ENCODE measurements at regions of chr5 and their contacts with region 1.

Region 1: GRCh38 chr5:134411546-134412266 is at the start of gene CDKN2AIPNL:
- DNase-seq: peak; percentile 91
- H3K4me3 ChIP-seq: peak within 1 kb of the TSS; percentile 100
- H3K27ac ChIP-seq: peak within 1 kb of the TSS; percentile 27
- H3K4me1 ChIP-seq: peaks cover 26% of the 10 kb centered on the region
- CTCF ChIP-seq: peak; percentile 79
- total RNA-seq, gene CDKN2AIPNL: 40.5 and 47.8 TPM in 2 replicates

Region 2: DNA sequence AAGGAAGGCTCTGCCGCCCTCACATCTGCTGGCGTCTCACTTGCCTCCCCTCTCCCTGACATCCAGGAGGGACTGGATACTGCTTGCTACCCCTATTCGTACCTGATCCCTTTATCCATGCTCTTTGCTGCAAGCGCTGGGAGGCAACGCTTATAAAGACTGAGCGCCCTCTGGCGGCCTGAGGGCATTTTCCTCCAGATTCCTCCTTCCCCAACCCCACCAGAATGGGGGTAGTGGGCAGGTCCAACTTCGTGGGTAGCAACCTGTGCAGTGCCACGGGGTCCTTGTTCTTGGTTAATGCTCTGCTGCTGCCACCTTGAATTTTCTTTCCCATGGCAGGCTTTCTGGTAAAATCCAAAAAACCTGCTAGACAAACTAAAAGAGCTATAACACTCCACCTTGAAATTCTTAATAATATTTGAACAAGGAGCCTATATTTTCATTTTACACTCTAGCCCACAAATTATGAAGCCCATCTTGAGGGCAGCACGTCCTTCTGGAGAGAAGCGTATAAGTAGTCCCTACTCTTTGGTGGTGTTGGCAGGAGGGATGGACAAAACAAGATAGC is 166.2 kb after region 1 on chr5:
- CTCF ChIA-PET with region 1: no interaction called
- POLR2A ChIA-PET with region 1: no interaction called
- intact Hi-C with region 1: loop called (anchors 2 kb)
- DNase-seq: peak; percentile 85
- H3K4me3 ChIP-seq: no peak overlapping the region
- H3K27ac ChIP-seq: no peak overlapping the region
- H3K4me1 ChIP-seq: no peaks in the 10 kb centered on the region
- CTCF ChIP-seq: peak; percentile 96

Measured in OCI-LY7 (cell line).